Right ventricle myocardium superior (tissue), 1 donor: ENCODE measurements at regions of chr1 and their contacts with region 1.

Region 1: DNA sequence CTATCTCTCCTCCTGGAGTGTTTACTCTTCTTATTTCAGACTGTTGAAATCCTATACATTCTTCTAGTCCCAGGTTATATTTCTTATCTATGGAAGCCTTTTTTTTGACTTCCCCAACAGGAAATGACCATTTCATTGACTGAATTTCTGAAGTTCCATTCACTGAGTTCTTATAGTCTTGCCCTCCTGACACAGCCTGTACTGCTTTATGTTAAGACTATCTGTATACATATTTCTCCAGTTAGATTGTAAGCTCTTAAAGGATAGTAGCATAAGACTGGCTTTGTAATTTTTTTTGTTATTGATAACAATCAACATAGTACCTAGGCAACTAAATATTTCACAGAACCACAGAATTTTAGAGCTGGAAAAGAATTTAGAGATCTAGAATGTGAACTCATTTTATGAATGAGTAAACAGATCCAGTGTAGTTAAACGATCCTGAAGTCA is 14.9 kb upstream of the MACF1 start:
- DNase-seq: no peak
- ATAC-seq: no peak

Region 2: DNA sequence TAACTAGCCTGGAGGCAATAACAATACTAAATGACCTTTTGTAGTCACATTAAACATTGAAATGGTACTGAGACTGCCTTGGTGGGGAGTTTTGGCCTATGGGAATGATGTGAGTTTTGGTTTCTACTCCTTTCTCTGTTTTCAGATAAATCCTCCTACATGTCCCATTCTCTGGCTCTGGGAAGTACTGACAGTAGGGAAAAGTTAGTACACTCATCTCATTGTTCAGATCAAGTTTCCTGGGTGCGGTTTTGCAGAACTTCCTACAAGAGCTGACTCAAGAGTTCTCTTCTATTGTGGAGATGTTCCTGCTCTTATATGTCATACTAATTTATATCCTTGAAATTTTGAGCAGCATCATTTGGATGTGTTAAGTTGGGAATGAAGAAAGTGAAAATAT is 59.3 kb before region 1 on chr1:
- intact Hi-C with region 1: loop called (anchors 2 kb)
- DNase-seq: no peak
- ATAC-seq: no peak

Region 3: DNA sequence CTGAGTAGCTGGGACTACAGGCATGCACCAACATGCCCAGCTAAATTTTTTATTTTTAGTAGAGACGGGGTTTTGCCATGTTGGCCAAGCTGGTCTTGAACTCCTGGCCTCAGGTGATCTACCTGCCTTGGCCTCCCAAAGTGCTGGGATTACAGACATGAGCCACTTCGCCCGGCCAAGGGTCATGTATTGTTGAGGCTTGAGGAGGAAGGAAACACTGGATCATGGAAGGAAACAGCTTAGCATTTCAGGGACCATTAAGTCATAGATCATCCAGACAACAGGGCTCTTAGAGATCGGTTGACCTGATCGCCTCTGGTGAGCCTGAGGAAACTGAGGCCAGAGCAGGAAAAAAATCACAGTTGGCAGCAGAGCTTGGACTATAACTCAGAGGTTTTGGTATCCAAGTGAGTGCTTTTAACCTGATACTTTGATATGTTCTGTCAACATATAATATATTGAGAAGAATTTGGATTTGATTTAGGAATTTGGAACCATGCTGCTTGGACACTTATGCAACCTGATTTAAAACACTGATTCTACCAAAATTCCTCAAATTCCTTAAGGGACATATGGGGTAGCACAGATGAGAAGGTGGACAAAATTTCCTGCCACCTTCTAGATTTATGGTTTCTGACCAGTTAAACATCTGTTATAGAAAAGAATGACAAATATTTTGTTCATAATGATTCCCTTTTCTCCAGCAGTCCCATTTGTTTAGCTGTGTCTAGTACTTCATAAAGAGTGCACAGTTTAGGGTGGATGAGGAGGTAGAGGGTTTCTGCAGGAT is 288.7 kb after region 1 on chr1:
- intact Hi-C with region 1: no loop called
- DNase-seq: no peak
- ATAC-seq: no peak